ENCODE measurements at regions of chr9 and their contacts with region 1.

Region 1: DNA sequence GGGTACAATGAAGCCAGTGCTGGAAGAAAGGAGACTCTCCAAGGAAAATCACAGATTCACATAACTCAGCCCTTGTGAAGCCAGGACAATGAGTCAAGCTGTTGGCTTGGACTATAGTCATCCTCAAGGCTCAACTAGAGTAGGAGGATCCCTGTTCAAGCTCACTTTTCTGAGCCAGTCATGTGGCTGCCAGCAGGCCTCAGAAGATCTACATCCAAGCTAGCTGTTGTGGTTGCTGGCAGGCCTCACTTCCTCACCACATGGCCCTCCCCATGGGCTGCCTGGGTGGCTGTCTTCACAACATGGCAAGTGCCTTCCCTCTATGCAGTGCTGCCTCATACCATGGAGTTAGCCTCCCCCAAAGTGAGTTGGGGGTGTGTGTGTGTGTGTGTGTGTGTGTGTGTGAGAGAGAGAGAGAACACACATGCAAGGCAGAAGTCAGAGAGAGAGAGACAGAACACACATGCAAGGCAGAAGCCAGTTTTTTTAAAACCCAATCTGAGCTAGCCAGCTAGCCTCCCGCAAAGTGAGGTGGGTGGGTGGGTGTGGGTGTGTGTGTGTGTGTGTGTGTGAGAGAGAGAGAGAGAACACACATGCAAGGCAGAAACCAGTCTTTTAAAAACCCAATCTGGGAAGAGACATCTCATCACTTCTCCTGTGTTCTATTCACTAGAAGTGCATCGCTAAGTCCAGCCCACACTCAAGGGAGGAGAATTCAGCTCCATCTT is 17.1 kb downstream of the SCAI start:
- DNase-seq: peak in 4 of 6 donors; percentile 14 to 61 (median 32)
- ATAC-seq: peak; percentile 17 to 92 (median 82)
- H3K4me3 ChIP-seq: no peak overlapping the region
- H3K27ac ChIP-seq: no peak overlapping the region
- H3K4me1 ChIP-seq: peaks cover 0 to under 1% (median 0%) of the 10 kb centered on the region in 3 donors
- H3K27me3 ChIP-seq: no peaks in the 10 kb centered on the region
- CTCF ChIP-seq: no peak

Region 2: DNA sequence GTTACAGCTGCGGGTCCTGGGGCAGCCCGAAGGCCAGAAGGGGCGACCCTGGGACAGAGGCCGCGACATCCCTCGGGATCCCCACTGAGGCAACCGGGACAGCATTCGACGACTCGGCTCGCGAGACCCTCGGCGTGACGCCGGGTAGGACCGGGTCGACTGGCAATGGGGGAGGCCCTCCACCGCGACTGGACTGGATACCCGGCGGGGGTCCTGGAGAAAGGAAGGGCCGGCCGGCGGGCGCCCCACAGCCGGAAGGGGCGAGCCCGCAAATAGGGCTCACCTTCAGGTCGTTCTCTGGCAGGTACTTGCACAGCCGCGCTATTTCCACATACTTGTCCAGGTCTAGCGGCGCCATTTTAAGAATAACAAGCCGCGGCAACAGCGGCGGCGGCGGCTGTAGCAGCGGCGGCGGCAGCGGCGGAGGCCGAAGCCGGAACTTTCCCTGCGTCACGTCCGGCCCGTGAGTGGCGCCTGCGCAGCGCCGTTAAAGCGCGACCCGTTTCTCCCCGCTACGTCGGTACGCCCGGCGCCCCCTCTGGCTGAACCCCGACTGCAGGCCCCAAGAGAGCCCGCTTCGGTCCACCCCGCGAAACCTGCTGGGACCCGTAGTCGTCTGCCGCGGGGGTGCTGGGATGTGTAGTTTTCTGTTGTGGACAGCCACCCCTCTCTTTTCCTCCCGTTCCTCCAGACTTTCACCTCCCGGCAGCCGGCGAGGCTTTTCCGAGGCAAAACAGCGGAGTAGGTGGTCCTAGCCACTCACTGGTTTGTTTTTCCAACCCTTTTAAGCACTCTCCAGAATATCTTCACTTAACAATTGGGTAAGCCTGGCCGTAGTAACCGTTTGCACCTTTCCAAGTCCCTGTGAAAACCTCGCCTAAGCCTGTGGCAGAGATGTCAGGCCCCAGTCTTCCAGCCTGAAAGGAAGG is 63.4 kb after region 1 on chr9 and contains the start of gene PPP6C:
- intact Hi-C with region 1: loop called in 1 of 3 experiments (anchors 10 kb)
- DNase-seq: peak; percentile 96 to 99 (median 97)
- ATAC-seq: peak; percentile 98 to 100 (median 98)
- H3K4me3 ChIP-seq: peak within 1 kb of the TSS; percentile 55 to 100 (median 98)
- H3K27ac ChIP-seq: peak within 1 kb of the TSS; percentile 85 to 89 (median 86)
- H3K4me1 ChIP-seq: peaks cover 7 to 21% (median 12%) of the 10 kb centered on the region in 3 donors
- H3K27me3 ChIP-seq: no peaks in the 10 kb centered on the region
- CTCF ChIP-seq: peak; percentile 46 to 62 (median 57)
- total RNA-seq, gene PPP6C: 16.9 to 26.7 (median 23.2) TPM

Measured in pancreas (tissue), 10 donors.